ENCODE measurements at regions of chr3 and their contacts with region 1.

Region 1: DNA sequence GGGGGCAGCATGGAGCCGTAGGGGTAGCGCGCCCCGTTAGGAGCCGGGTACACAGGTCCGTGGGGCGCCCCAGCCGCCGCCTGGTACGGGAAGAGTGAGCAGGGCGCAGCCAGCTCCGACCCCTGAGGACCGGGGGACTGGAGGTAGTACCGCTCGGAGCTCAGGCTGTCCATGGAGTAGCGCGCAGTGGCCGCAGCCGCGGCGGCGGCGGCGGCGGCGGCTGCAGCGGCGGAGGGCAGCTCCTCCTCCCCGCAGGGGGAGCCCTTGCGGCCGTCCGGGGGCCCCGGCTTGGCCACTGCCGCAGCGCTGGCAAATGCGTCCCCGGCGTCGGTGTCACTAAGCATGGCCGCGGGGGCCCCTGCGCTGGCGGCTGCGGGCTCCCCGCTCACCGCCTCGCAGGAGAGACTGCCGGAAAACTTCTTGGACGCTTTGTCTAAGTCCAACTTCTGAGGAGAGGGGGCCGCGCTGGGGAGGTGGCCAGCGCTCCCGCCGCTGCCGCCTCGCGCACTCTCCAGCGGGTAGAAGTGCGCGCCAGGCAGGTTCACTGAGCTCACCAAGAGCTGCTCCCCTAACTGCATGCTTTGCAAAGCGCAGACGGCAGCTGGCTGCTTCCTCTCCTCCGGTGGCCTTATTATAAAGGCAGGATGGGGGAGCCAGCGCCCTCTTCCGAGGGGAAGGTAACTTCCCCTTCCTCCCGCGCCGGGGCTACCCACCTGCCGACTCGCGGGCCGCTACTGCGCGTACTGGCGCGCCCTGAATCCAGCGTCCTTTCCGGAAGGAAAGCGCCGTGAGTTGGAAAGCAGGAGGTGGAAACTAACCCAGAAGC is at the start of gene EOMES:
- DNase-seq: peak; percentile 67 to 89
- ATAC-seq: peak; percentile 52 to 74 (median 70)
- H3K4me3 ChIP-seq: peak within 1 kb of the TSS; percentile 89
- H3K4me3 Mint-ChIP-seq: peak within 1 kb of the TSS; percentile 100
- H3K27ac ChIP-seq: peak within 1 kb of the TSS; percentile 81
- H3K27ac Mint-ChIP-seq: peak within 1 kb of the TSS; percentile 93 to 98
- H3K4me1 ChIP-seq: peaks cover 37% of the 10 kb centered on the region
- H3K4me1 Mint-ChIP-seq: peaks cover 54 to 67% of the 10 kb centered on the region in 2 donors
- H3K27me3 ChIP-seq: peaks cover 17% of the 10 kb centered on the region
- H3K27me3 Mint-ChIP-seq: peaks cover 35 to 37% of the 10 kb centered on the region in 2 donors
- CTCF ChIP-seq: peak; percentile 59
- total RNA-seq, gene EOMES: 30.3 to 64.0 (median 32.2) TPM

Region 2: GRCh38 chr3:27767000-27767399 is 45.1 kb after region 1 on chr3:
- intact Hi-C with region 1: no loop called
- DNase-seq: no peak
- ATAC-seq: no peak
- H3K4me3 ChIP-seq: no peak overlapping the region
- H3K4me3 Mint-ChIP-seq: no peak overlapping the region
- H3K27ac ChIP-seq: no peak overlapping the region
- H3K27ac Mint-ChIP-seq: no peak overlapping the region
- H3K4me1 ChIP-seq: peaks cover 7% of the 10 kb centered on the region
- H3K4me1 Mint-ChIP-seq: peaks cover 11 to 16% of the 10 kb centered on the region in 2 donors
- H3K27me3 ChIP-seq: no peaks in the 10 kb centered on the region
- H3K27me3 Mint-ChIP-seq: peaks cover 4 to 17% of the 10 kb centered on the region in 2 donors
- CTCF ChIP-seq: no peak

Region 3: GRCh38 chr3:27861046-27862036 is 139.4 kb after region 1 on chr3:
- intact Hi-C with region 1: no loop called
- DNase-seq: peak in 1 of 2 donors; percentile 65
- ATAC-seq: peak; percentile 90 to 99 (median 92)
- H3K4me3 ChIP-seq: no peak overlapping the region
- H3K4me3 Mint-ChIP-seq: peak overlapping the region; percentile 50
- H3K27ac ChIP-seq: peak overlapping the region; percentile 13
- H3K27ac Mint-ChIP-seq: peak overlapping the region; percentile 61 to 69
- H3K4me1 ChIP-seq: peaks cover 26% of the 10 kb centered on the region
- H3K4me1 Mint-ChIP-seq: peaks cover 39 to 40% of the 10 kb centered on the region in 2 donors
- H3K27me3 ChIP-seq: no peaks in the 10 kb centered on the region
- H3K27me3 Mint-ChIP-seq: peaks cover 0 to 3% of the 10 kb centered on the region in 2 donors
- CTCF ChIP-seq: no peak

Region 4: DNA sequence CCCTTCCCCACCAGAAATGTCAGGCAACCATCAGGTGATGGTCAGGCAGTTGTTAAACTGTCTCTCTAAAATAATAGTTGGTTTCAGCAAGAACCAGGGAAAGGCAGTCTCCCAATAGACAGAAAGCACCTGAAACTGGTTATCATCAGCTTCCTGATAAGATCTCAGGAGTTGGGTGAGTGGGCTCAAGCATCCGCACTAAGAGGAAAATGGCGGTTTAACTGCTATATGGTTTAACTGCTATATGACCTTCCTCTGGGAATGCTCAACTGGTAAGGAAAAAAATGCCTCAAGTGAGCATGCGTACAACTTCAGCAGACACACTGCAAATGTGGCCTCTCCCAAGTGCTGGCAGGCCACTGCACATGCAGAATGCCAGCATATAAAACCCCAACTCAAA is 278.7 kb after region 1 on chr3:
- intact Hi-C with region 1: no loop called
- DNase-seq: no peak
- ATAC-seq: no peak
- H3K4me3 ChIP-seq: no peak overlapping the region
- H3K4me3 Mint-ChIP-seq: no peak overlapping the region
- H3K27ac ChIP-seq: no peak overlapping the region
- H3K27ac Mint-ChIP-seq: no peak overlapping the region
- H3K4me1 ChIP-seq: no peaks in the 10 kb centered on the region
- H3K4me1 Mint-ChIP-seq: no peaks in the 10 kb centered on the region
- H3K27me3 ChIP-seq: no peaks in the 10 kb centered on the region
- H3K27me3 Mint-ChIP-seq: peaks cover 0 to 7% of the 10 kb centered on the region in 2 donors
- CTCF ChIP-seq: no peak

Region 5: GRCh38 chr3:28241221-28242160 is 519.6 kb after region 1 on chr3 and contains the start of gene CMC1:
- intact Hi-C with region 1: loop called (anchors 2 kb)
- DNase-seq: peak; percentile 77 to 93
- ATAC-seq: peak; percentile 80 to 91 (median 87)
- H3K4me3 ChIP-seq: peak within 1 kb of the TSS; percentile 90
- H3K4me3 Mint-ChIP-seq: peak within 1 kb of the TSS; percentile 96
- H3K27ac ChIP-seq: peak within 1 kb of the TSS; percentile 72
- H3K27ac Mint-ChIP-seq: peak within 1 kb of the TSS; percentile 7 to 88
- H3K4me1 ChIP-seq: peaks cover 28% of the 10 kb centered on the region
- H3K4me1 Mint-ChIP-seq: peaks cover 41 to 46% of the 10 kb centered on the region in 2 donors
- H3K27me3 ChIP-seq: no peaks in the 10 kb centered on the region
- H3K27me3 Mint-ChIP-seq: peaks cover 2 to 8% of the 10 kb centered on the region in 2 donors
- CTCF ChIP-seq: no peak
- total RNA-seq, gene CMC1: 122 to 157 (median 136) TPM

Region 6: DNA sequence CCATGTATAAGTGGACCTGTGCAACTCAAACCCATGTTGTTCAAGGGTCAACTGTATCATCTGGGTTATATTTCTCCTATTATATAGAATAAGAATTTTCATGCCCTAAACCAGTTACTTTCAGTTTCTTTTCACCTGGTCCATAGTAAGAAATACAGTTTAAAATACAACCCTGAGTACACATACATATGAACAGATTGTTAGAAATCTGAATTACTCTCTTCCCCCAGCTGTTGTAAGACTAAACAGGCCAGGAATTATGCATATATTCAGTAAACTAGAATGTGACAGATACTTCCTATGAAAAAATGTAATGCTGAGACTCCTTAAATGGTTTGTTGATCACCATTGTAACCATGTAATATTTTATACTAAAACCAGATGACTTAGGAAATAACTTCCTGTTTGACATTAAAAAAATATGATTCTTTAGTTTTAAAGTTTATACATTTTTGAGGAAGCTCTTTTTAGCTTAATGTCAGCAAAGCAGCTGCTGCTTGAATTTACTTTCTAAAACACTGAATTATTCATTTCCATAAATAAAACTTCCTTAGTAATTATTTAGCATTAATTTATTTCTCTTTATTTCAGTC is 574.1 kb after region 1 on chr3:
- intact Hi-C with region 1: loop called (anchors 2 kb)
- DNase-seq: peak in 1 of 2 donors; percentile 19
- ATAC-seq: peak; percentile 28 to 31 (median 29)
- H3K4me3 ChIP-seq: peak overlapping the region; percentile 72
- H3K4me3 Mint-ChIP-seq: peak overlapping the region; percentile 92
- H3K27ac ChIP-seq: peak overlapping the region; percentile 94
- H3K27ac Mint-ChIP-seq: peak overlapping the region; percentile 94 to 95
- H3K4me1 ChIP-seq: peaks cover 9% of the 10 kb centered on the region
- H3K4me1 Mint-ChIP-seq: peaks cover 61 to 72% of the 10 kb centered on the region in 2 donors
- H3K27me3 ChIP-seq: no peaks in the 10 kb centered on the region
- H3K27me3 Mint-ChIP-seq: no peaks in the 10 kb centered on the region
- CTCF ChIP-seq: no peak

Measured in natural killer cell (primary cell).